OCI-LY7 (cell line): ENCODE measurements at regions of chr20 and their contacts with region 1.

Region 1: GRCh38 chr20:47725248-47725973 is 59.9 kb downstream of the SULF2 start:
- DNase-seq: peak; percentile 92
- H3K4me3 ChIP-seq: no peak overlapping the region
- H3K27ac ChIP-seq: no peak overlapping the region
- H3K4me1 ChIP-seq: peaks cover 34% of the 10 kb centered on the region
- CTCF ChIP-seq: peak; percentile 98

Region 2: DNA sequence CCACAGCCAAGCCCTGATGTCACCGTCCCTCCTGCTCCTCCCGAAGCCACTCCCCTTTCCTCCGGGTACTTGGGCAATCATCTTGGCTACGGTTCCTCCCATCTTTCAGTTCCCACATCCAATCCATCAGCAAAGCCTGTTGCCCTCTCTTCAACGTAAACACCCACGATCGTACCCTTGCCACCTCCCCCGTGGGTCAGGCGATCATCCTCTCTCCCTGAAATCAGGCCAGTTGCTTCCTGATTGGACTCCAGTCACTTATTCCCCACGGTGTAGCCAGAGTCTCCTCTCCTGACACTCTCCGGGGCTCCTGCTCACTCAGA is 15.4 kb after region 1 on chr20:
- CTCF ChIA-PET with region 1: no interaction called
- POLR2A ChIA-PET with region 1: no interaction called
- intact Hi-C with region 1: no loop called
- DNase-seq: no peak
- H3K4me3 ChIP-seq: no peak overlapping the region
- H3K27ac ChIP-seq: no peak overlapping the region
- H3K4me1 ChIP-seq: no peaks in the 10 kb centered on the region
- CTCF ChIP-seq: no peak

Region 3: DNA sequence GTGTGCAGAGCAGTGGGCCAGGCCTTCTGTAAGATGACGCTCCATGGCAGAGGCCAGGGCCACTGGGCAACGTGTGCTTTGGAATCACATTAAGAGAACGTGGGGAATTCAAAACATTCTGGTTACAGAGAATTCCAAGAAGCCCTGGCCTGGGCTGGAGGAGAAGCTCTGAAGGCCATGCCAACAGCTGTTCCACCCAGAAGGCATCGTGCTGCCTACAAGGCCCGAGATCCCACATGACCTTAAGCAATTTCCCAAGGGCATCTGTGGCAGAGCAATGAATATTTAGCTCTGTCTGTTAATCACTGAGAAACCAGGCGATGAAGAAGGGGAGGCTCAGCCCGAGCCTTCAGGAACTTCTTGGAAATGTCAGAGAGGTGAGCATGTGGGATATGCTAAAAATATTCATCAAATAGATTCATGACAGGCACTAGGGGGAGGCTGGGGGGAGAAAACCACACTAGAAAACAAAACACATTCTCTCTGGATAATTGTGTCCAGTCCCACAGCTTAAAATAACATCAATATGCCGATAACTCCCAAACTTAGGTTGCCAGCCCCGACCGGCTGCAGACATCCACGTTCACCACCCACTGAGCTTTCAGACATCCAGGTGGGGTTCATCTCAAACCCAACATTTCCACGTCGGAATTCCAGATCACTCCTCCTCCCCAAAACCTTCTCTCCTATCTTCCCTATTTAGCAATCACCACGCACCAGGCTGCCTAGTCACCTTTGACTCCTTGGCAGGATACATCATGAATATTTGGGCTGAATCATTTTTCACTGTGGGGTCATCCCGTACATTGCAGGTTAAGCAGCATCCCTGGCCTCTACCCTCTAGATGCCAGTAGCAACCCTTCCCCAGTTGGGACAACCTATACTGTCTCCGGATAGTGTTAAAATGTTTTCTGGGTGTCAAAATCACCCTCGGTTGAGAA is 53.3 kb after region 1 on chr20:
- CTCF ChIA-PET with region 1: no interaction called
- POLR2A ChIA-PET with region 1: no interaction called
- intact Hi-C with region 1: loop called (anchors 5 kb)
- DNase-seq: no peak
- H3K4me3 ChIP-seq: no peak overlapping the region
- H3K27ac ChIP-seq: no peak overlapping the region
- H3K4me1 ChIP-seq: no peaks in the 10 kb centered on the region
- CTCF ChIP-seq: no peak

Region 4: GRCh38 chr20:47973519-47974233 is 248.3 kb after region 1 on chr20:
- CTCF ChIA-PET with region 1: no interaction called
- POLR2A ChIA-PET with region 1: interaction called, 3 read pairs
- intact Hi-C with region 1: loop called (anchors 2 kb)
- DNase-seq: no peak
- H3K4me3 ChIP-seq: no peak overlapping the region
- H3K27ac ChIP-seq: no peak overlapping the region
- H3K4me1 ChIP-seq: peaks cover 64% of the 10 kb centered on the region
- CTCF ChIP-seq: no peak

Region 5: DNA sequence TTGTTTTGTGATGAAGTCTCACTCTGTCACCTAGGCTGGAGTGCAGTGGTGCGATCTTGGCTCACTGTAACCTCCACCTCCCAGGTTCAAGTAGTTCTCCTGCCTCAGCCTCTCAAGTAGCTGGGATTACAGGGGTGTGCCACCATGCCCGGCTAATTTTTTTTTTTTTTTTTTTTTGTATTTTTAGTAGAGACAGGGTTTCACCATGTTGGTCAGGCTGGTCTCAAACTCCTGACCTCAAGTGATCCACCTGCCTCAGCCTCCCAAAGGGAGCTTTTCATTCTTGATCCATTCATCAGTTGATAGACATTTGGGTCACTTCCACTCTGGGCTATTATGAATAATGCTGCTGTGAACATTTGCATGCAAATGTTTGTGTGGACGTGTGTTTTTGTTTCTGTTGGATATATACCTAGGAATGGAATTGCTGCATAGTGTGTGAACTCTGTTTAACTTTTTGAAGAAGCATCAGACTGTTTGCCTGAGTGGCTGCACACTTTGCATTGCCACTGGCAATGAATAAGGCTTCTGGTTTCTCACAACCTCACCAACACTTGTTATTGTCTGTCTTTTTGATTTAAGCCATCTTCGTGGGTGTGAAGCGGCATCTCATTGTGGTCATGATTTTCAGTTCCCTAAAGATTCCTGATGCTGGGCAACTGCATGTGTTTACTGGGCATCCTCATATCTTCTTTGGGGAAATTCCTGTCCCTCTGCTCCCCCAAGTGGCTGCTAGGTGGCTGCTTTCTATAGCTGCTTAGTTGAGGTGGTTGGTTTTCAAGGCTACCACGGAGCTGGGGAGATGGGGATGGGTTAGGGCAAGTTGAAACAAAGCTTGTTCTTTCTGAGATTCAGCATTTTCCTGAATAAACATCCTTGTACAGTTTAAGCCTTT is 463.5 kb after region 1 on chr20:
- CTCF ChIA-PET with region 1: no interaction called
- POLR2A ChIA-PET with region 1: no interaction called
- intact Hi-C with region 1: loop called (anchors 5 kb)
- DNase-seq: peak; percentile 46
- H3K4me3 ChIP-seq: no peak overlapping the region
- H3K27ac ChIP-seq: no peak overlapping the region
- H3K4me1 ChIP-seq: no peaks in the 10 kb centered on the region
- CTCF ChIP-seq: peak; percentile 76

Region 6: DNA sequence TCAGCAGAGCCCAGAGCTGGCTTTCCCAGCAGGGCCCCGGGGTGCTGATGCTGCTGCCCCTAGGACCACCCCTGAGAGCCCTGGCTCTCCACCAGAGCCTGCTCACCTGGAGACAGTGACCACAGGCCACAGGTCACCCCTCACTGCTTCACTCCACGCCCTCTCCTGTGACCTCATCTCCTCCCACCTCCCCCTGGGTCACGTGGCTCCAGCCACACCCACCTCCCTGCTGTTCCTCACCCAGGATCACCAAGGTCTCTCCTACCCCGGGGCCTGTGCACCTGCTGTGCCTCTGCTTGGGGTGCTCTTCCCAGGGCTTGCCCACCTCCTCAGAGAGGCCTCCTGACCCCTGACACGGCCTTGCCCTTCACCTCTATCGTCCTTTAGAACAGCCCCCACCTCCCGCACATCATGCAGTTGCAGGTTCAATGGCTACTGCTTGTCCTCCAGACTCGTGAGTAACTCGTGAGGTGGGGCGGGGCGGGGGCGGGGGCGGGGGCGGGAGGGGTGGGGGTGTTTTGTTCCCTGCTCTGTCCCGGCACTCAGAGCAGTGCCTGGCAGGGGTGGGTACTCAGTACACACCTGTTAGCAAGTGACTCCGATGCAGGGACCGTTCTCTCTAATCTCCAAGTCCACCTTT is 634.4 kb after region 1 on chr20:
- CTCF ChIA-PET with region 1: no interaction called
- POLR2A ChIA-PET with region 1: no interaction called
- intact Hi-C with region 1: loop called (anchors 5 kb)
- DNase-seq: peak; percentile 74
- H3K4me3 ChIP-seq: peak overlapping the region; percentile 61
- H3K27ac ChIP-seq: peak overlapping the region; percentile 69
- H3K4me1 ChIP-seq: peaks cover 32% of the 10 kb centered on the region
- CTCF ChIP-seq: no peak